IMR-90 (cell line): ENCODE measurements at regions of chr17 and their contacts with region 1.

Region 1: DNA sequence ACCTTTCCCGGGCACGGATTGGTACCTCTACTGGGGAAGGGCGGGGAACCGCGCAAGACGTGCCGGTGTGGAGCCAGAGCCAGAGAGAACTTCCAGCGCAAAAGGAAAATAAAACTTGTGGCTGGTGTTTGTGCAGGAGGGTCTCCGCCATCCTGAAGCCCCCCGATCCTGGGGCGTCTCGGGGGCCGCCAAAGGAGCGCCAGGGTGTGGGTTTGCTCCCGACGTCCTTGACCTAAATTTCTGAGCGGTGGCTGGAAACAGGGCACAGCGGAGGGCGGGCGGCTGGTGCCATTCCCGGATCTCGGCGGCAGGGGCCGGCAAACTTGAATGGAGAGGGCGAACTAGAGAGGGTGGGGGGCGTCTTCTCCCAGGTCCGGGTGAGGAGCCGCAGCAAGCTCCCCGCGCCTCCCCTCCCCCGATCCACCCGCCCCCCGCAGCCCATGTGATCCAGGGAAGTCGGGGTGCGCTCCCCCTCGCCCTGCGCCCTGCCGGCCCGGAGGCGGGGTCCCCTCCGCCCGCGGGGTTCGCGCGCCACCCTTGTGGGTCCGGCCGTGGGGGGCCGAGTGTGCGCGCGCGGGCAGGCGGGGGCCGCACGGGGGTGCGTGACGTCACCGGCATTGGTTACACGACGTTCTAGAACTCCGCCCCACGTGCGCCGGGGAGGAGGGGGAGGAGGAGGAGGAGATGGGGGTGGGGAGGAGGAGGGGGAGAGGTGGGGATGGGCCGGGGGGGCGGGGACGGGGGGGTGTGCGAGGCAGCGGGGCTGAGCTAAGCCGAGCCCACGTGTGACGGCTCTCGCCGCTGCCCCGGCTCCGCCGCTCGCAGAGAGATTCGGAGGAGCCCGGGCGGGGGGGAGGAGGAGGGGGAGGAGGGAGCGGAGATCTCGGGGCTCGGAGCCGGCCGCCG is at the start of gene MSI2:
- DNase-seq: peak; percentile 78
- ATAC-seq: peak; percentile 84
- H3K4me3 ChIP-seq: peak within 1 kb of the TSS; percentile 99
- H3K27ac ChIP-seq: peak within 1 kb of the TSS; percentile 54
- H3K4me1 ChIP-seq: no peaks in the 10 kb centered on the region; the same call in 1 of the 2 replicates
- H3K27me3 ChIP-seq: peaks cover 5% of the 10 kb centered on the region
- CTCF ChIP-seq: no peak
- POLR2A ChIP-seq: no peak
- RAD21 ChIP-seq: no peak
- total RNA-seq, gene MSI2: 16.0 and 18.1 TPM in 2 replicates

Region 2: DNA sequence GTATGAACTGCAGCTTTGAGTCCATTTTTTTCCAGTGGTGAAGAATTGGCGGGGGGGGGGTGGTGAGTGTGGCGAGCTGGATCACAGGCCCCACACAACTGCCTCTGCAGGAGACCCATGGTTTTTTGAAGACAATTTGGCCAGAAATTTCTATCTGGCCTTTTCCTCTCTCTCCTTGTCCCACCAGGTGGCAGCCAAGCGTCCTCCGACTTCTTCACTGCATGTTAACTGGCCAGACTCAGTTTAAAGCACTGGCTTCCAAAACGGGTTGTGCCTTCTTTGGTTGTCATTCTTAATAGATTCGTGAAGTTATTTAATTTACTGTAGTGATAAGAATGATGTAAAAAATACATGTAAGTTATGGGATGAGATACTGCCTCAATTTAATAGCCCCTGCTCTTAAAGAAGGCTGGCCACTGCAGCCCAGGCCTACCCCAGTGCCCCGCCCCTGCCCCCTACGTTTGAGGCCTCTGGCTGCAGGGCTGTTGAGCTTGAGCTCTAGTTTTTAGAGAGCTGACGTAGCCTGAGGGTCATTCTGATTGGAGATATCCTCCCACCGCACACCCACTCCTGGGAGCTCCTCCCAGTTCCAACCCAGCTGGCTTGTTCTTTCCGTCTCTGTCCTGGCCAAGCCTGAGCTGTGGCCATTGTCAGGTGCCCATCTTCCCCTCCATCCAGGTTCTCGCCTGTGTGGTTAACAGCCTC is 134.5 kb before region 1 on chr17:
- CTCF ChIA-PET with region 1: no interaction called
- POLR2A ChIA-PET with region 1: no interaction called
- dilution Hi-C with region 1: no loop called
- in situ Hi-C with region 1: no loop called
- intact Hi-C with region 1: no loop called
- DNase-seq: peak; percentile 36
- ATAC-seq: peak; percentile 90
- H3K4me3 ChIP-seq: no peak overlapping the region
- H3K27ac ChIP-seq: no peak overlapping the region
- H3K4me1 ChIP-seq: no peaks in the 10 kb centered on the region
- H3K27me3 ChIP-seq: no peaks in the 10 kb centered on the region
- CTCF ChIP-seq: peak; percentile 52
- POLR2A ChIP-seq: no peak
- RAD21 ChIP-seq: peak; percentile 36

Region 3: GRCh38 chr17:57294629-57295535 is 38.9 kb after region 1 on chr17:
- CTCF ChIA-PET with region 1: no interaction called
- POLR2A ChIA-PET with region 1: no interaction called
- dilution Hi-C with region 1: no loop called
- in situ Hi-C with region 1: no loop called
- intact Hi-C with region 1: no loop called
- DNase-seq: peak; percentile 41
- ATAC-seq: peak; percentile 71
- H3K4me3 ChIP-seq: no peak overlapping the region
- H3K27ac ChIP-seq: peak overlapping the region; percentile 53
- H3K4me1 ChIP-seq: peaks cover 17% of the 10 kb centered on the region
- H3K27me3 ChIP-seq: no peaks in the 10 kb centered on the region
- CTCF ChIP-seq: no peak
- POLR2A ChIP-seq: no peak
- RAD21 ChIP-seq: no peak

Region 4: DNA sequence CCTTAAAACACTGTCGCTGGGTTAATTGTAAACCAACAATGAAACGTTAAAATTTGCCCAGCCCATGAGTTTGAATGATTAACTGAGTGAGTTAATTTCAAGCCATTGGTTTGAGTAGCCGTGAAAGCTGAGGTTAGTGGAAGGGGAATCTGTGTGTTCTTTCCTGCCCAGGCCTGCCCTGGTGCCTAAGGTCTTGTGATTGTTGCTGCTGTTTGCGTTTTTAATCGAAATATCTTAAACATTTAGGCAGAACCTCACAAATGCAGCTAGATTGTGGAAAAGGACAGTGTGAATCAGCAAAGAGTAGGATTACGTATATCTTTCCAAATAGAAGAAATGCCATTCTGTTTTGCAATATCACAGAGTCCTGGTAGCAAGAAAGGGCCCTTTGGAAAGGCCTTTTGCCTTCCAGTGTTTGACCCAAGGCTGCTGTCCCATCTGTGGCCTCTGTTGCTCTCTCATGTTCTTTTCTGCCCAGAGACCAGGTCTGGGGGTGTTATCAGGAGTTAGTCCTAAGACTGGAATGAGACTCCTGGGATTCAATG is 114.1 kb after region 1 on chr17:
- CTCF ChIA-PET with region 1: interaction called, 3 read pairs
- POLR2A ChIA-PET with region 1: no interaction called
- dilution Hi-C with region 1: no loop called
- in situ Hi-C with region 1: no loop called
- intact Hi-C with region 1: loop called (anchors 5 kb)
- DNase-seq: peak; percentile 88
- ATAC-seq: peak; percentile 90
- H3K4me3 ChIP-seq: no peak overlapping the region
- H3K27ac ChIP-seq: peak overlapping the region; percentile 81
- H3K4me1 ChIP-seq: peaks cover 11% of the 10 kb centered on the region
- H3K27me3 ChIP-seq: no peaks in the 10 kb centered on the region
- CTCF ChIP-seq: no peak
- POLR2A ChIP-seq: no peak
- RAD21 ChIP-seq: no peak

Region 5: GRCh38 chr17:57480438-57481196 is 224.6 kb after region 1 on chr17:
- CTCF ChIA-PET with region 1: no interaction called
- POLR2A ChIA-PET with region 1: no interaction called
- dilution Hi-C with region 1: no loop called
- in situ Hi-C with region 1: no loop called
- intact Hi-C with region 1: loop called (anchors 5 kb)
- DNase-seq: peak; percentile 72
- ATAC-seq: peak; percentile 40
- H3K4me3 ChIP-seq: no peak overlapping the region
- H3K27ac ChIP-seq: no peak overlapping the region
- H3K4me1 ChIP-seq: peaks cover 31% of the 10 kb centered on the region
- H3K27me3 ChIP-seq: no peaks in the 10 kb centered on the region
- CTCF ChIP-seq: no peak
- POLR2A ChIP-seq: no peak
- RAD21 ChIP-seq: no peak

Region 6: DNA sequence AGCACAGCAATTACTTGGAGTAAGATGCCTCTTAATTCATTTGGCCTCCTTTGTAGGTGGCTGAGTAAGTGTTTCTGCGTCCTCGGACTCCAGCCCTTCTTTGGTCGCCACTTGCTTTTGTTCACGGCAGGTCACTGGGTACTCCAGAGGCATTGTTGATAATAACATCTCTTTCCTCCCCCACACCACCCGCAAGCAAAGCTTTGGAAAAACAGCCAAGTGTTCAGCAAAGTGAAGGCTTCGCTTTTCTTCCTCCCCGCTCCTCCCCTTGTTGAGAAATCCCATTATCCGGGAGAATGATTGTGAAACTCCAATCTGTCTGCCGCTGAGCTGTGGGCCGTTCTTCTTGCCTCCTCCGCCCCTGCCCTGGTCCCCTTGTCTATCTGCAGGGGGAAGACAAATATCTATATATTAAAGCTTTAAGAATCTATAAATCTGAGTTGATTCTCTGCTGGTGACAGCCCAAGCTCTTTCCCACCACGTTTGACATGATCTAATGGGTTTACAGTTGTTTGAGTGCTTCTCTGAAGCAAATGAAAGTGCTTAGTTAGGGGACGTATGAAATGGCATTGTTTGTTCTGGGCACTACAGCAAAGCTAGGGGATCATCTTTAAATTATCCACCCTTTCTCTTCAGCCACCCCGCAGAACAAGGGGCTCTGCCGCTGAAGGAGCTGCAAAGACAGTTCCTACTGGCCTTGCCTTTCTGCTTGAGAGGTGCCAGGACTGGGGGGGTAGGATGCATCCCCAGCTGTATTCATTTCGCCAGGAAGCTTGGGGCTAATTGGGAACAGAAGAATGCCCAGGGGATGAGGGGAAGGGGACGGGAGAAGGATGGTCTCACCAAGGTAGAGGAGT is 321.9 kb after region 1 on chr17:
- CTCF ChIA-PET with region 1: no interaction called
- POLR2A ChIA-PET with region 1: interaction called, 4 read pairs
- dilution Hi-C with region 1: no loop called
- in situ Hi-C with region 1: no loop called
- intact Hi-C with region 1: loop called (anchors 5 kb)
- DNase-seq: peak; percentile 70
- ATAC-seq: peak; percentile 92
- H3K4me3 ChIP-seq: peak overlapping the region; percentile 43
- H3K27ac ChIP-seq: peak overlapping the region; percentile 75; the same call in 1 of the 2 replicates
- H3K4me1 ChIP-seq: peaks cover 5% of the 10 kb centered on the region
- H3K27me3 ChIP-seq: no peaks in the 10 kb centered on the region
- CTCF ChIP-seq: no peak
- POLR2A ChIP-seq: no peak
- RAD21 ChIP-seq: no peak

Region 7: GRCh38 chr17:57597531-57598453 is 341.8 kb after region 1 on chr17:
- CTCF ChIA-PET with region 1: no interaction called
- POLR2A ChIA-PET with region 1: no interaction called
- dilution Hi-C with region 1: no loop called
- in situ Hi-C with region 1: no loop called
- intact Hi-C with region 1: loop called (anchors 2 kb)
- DNase-seq: peak; percentile 82
- ATAC-seq: peak; percentile 88
- H3K4me3 ChIP-seq: no peak overlapping the region
- H3K27ac ChIP-seq: no peak overlapping the region
- H3K4me1 ChIP-seq: peaks cover 4% of the 10 kb centered on the region
- H3K27me3 ChIP-seq: no peaks in the 10 kb centered on the region
- CTCF ChIP-seq: peak; percentile 85
- POLR2A ChIP-seq: no peak
- RAD21 ChIP-seq: peak; percentile 85

Region 8: DNA sequence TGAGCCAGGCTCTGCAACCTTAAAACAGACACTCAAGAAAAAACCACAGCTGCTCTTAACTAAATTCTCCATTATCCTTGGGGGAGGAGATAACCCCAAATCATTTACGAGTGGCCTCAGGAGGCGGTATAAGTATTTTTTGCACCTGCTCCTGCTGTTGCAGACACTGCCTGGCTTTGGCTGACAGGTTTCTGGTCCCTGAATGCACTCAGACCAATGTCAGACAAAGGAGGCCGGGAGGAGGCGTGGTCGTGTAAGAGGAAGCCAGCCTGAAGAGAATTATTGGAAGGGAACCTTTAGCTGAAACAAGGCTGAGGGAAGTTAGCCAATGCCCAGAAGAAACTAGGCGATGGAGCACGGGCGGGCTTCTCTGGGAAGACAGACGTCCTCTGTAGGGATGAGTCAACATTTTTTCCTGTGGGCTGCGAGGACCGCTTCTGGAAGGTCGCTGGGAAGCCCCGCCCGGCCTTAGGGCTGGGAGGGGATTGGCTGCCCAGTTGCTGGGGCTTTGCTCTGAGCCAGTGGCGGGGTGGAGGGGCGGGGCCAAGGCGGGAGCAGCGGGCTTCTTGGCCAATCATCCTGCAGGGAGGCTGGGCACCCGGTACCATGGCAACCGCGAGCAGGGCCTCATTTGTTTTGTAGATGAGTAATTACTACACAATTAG is 406.7 kb after region 1 on chr17:
- CTCF ChIA-PET with region 1: no interaction called
- POLR2A ChIA-PET with region 1: no interaction called
- dilution Hi-C with region 1: no loop called
- in situ Hi-C with region 1: loop called (anchors 5 kb)
- intact Hi-C with region 1: no loop called
- DNase-seq: peak; percentile 99
- ATAC-seq: peak; percentile 98
- H3K4me3 ChIP-seq: peak overlapping the region; percentile 1; the same call in 1 of the 2 replicates
- H3K27ac ChIP-seq: peak overlapping the region; percentile 38
- H3K4me1 ChIP-seq: peaks cover 17% of the 10 kb centered on the region
- H3K27me3 ChIP-seq: no peaks in the 10 kb centered on the region
- CTCF ChIP-seq: no peak
- POLR2A ChIP-seq: peak; percentile 48
- RAD21 ChIP-seq: peak; percentile 30; the same call in 1 of the 2 replicates

Region 9: DNA sequence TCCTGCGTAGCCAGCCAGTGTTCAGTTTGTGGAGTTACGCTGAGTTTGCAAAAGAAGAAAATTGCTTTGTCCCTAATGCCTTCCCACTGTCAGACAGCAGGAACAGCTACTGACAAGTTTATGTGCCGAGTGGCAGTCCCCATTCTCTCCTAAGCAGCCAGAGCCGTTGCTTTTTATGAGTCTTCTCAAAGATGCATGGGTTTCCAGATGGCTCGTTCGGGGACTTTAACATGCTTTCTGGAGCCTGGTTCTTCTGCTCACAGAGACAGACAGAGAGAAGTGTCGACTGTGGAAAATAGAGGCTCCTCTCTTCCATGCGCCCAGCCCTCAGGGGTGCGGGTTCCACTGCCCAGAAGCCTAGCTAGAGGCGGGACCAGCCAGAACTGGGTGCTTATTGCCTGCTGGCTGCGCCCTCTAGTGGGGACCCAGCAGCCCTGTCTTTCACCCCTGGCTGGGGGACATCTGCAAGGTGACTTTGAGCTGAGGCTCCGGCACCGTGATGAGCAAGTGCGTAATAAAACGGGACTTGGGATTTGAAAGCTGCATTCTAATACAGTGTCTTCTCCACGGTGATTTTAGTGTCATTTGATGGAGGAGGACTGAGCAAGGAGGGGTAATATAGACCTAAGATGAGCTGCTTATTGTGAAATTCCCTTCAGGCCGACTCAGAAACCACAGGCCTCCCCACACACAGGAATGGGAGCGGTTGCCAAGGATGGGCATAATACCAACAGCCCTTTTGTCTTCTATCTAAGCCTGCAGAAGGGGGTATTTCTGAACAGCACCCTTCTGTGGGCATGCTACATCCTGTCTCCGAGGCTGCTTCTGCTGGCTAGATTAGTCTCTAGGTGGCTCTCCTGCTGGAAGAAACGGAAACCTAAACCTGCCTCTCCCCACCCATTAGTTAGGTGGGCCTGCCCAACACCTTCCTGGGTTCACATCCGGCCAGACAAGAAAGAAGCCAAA is 415.9 kb after region 1 on chr17:
- CTCF ChIA-PET with region 1: no interaction called
- POLR2A ChIA-PET with region 1: no interaction called
- dilution Hi-C with region 1: no loop called
- in situ Hi-C with region 1: loop called (anchors 5 kb)
- intact Hi-C with region 1: loop called (anchors 1 kb)
- DNase-seq: peak; percentile 69
- ATAC-seq: peak; percentile 99
- H3K4me3 ChIP-seq: no peak overlapping the region
- H3K27ac ChIP-seq: no peak overlapping the region
- H3K4me1 ChIP-seq: peaks cover 12% of the 10 kb centered on the region
- H3K27me3 ChIP-seq: no peaks in the 10 kb centered on the region
- CTCF ChIP-seq: peak; percentile 89
- POLR2A ChIP-seq: 0 out of 2 replicates have a peak, but pooled peaks have one; percentile 25
- RAD21 ChIP-seq: peak; percentile 93